ENCODE measurements at regions of chr3 and their contacts with region 1.

Region 1: GRCh38 chr3:120596116-120596852 is at the start of gene NDUFB4:
- DNase-seq: peak; percentile 98
- ATAC-seq: peak; percentile 96
- H3K4me3 ChIP-seq: peak within 1 kb of the TSS; percentile 98
- H3K27ac ChIP-seq: peak within 1 kb of the TSS; percentile 97
- H3K4me1 ChIP-seq: no peaks in the 10 kb centered on the region; the same call in 1 of the 2 replicates
- H3K27me3 ChIP-seq: no peaks in the 10 kb centered on the region
- CTCF ChIP-seq: no peak
- EP300 ChIP-seq: no peak
- POLR2A ChIP-seq: peak; percentile 90
- RAD21 ChIP-seq: no peak
- polyA plus RNA-seq, gene NDUFB4: 732 to 864 TPM

Region 2: DNA sequence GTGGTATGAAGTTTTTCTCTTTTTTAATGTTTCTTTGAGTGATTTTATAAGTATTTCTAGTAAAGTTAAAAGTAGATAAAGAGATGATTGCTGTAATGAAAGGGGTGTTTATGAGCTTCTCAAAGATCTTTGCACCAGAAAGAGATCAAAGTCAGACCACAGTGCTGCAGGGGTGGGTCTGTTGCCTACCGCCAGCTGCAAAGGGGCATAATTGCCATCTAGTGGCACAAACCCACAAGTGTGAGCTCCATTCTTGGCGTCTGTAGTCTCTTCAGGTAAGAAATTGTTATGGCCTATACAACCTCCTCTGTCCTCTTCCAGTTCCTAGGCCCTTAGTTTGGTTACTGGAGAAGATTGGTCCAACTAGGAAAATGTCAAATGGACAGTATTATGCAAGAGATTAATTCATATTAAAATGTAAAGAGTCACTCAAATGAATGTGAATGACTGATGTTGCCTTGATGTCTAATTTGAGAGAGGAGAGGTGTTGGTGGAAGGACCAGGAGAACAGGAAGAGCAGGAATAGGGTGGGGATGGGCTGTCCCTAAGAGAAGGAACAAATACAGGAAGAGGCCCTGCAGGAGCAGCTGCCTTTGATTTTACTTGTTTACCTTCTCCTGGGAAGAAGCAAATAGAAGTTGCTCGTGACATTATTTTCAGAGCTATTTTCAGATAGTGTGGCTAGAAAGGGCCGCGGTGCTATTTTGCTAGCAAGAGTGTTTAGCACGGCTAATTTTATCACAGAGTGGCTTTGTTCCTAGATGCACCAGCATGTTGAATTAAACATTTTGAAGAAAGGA is 449.0 kb before region 1 on chr3:
- CTCF ChIA-PET with region 1: no interaction called
- POLR2A ChIA-PET with region 1: no interaction called
- RAD21 ChIA-PET with region 1: no interaction called
- SMC1A ChIA-PET with region 1: no interaction called
- in situ Hi-C with region 1: no loop called
- intact Hi-C with region 1: no loop called
- DNase-seq: no peak
- ATAC-seq: peak; percentile 82
- H3K4me3 ChIP-seq: no peak overlapping the region
- H3K27ac ChIP-seq: no peak overlapping the region
- H3K4me1 ChIP-seq: peaks cover 10% of the 10 kb centered on the region
- H3K27me3 ChIP-seq: no peaks in the 10 kb centered on the region
- CTCF ChIP-seq: peak; percentile 37 to 42 (median 39); a peak in 5 of 6 replicates
- EP300 ChIP-seq: no peak
- POLR2A ChIP-seq: no peak
- RAD21 ChIP-seq: peak; percentile 73

Region 3: GRCh38 chr3:120438665-120439370 is 157.5 kb before region 1 on chr3:
- CTCF ChIA-PET with region 1: no interaction called
- POLR2A ChIA-PET with region 1: no interaction called
- RAD21 ChIA-PET with region 1: no interaction called
- SMC1A ChIA-PET with region 1: no interaction called
- in situ Hi-C with region 1: no loop called
- intact Hi-C with region 1: no loop called
- DNase-seq: no peak
- ATAC-seq: no peak
- H3K4me3 ChIP-seq: no peak overlapping the region
- H3K27ac ChIP-seq: no peak overlapping the region
- H3K4me1 ChIP-seq: no peaks in the 10 kb centered on the region
- H3K27me3 ChIP-seq: peaks cover 0 to 2% of the 10 kb centered on the region in 2 experiments; a peak in 3 of 4 replicates
- CTCF ChIP-seq: no peak
- EP300 ChIP-seq: no peak
- POLR2A ChIP-seq: no peak
- RAD21 ChIP-seq: no peak

Region 4: DNA sequence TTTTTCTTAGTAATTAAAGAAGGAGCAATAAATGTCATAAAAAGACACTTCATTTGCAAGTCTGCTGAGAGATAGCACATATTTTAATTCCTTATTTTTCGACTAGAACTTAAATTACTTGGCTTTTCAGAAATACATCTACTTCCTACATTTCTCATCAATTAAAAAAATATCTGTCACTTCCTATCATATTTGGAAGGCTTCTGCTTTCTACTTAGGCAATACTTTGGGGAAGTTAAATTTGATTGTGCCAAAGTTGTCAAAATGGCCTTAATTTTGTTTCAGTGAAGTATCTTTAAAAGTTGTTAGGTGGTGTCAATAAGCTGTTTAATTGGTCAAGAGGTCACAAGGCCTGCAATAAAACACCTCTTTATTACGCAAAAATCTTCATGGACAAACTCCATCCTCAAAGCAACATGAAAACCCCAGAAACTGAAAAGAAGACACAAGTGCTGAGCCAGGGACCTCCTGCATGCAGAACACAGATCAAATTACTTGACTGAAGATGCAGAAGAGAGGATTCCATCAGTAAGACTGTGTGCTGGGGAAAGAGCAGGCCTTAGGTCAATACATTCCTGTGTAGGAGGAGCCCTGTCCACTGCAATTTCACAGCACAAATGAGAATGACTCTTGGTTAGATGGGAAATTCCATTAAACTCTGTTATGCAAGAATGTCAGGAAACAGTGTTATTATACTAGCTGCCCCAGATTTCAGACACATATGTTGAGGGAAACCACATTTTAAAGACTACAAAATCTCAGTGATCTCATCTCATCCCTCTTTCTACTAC is 97.5 kb before region 1 on chr3:
- CTCF ChIA-PET with region 1: no interaction called
- POLR2A ChIA-PET with region 1: no interaction called
- RAD21 ChIA-PET with region 1: no interaction called
- SMC1A ChIA-PET with region 1: no interaction called
- in situ Hi-C with region 1: no loop called
- intact Hi-C with region 1: no loop called
- DNase-seq: no peak
- ATAC-seq: no peak
- H3K4me3 ChIP-seq: no peak overlapping the region
- H3K27ac ChIP-seq: no peak overlapping the region
- H3K4me1 ChIP-seq: no peaks in the 10 kb centered on the region
- H3K27me3 ChIP-seq: no peaks in the 10 kb centered on the region
- CTCF ChIP-seq: no peak
- EP300 ChIP-seq: no peak
- POLR2A ChIP-seq: no peak
- RAD21 ChIP-seq: no peak

Region 5: GRCh38 chr3:120567370-120568201 is 28.7 kb before region 1 on chr3:
- CTCF ChIA-PET with region 1: interaction called, 16 read pairs
- POLR2A ChIA-PET with region 1: interaction called, 4 read pairs
- RAD21 ChIA-PET with region 1: interaction called, 15 read pairs
- SMC1A ChIA-PET with region 1: interaction called, 19 read pairs
- in situ Hi-C with region 1: no loop called
- intact Hi-C with region 1: no loop called
- DNase-seq: no peak
- ATAC-seq: peak; percentile 89
- H3K4me3 ChIP-seq: no peak overlapping the region
- H3K27ac ChIP-seq: no peak overlapping the region
- H3K4me1 ChIP-seq: no peaks in the 10 kb centered on the region
- H3K27me3 ChIP-seq: no peaks in the 10 kb centered on the region
- CTCF ChIP-seq: peak in 2 of 3 experiments; percentile 21 to 34; a peak in 3 of 6 replicates
- EP300 ChIP-seq: no peak
- POLR2A ChIP-seq: no peak
- RAD21 ChIP-seq: no peak

Region 6: GRCh38 chr3:120678331-120678947 is 82.2 kb after region 1 on chr3:
- CTCF ChIA-PET with region 1: interaction called, 3 read pairs
- POLR2A ChIA-PET with region 1: interaction called, 8 read pairs
- RAD21 ChIA-PET with region 1: interaction called, 12 read pairs
- SMC1A ChIA-PET with region 1: interaction called, 17 read pairs
- in situ Hi-C with region 1: no loop called
- intact Hi-C with region 1: no loop called
- DNase-seq: peak; percentile 35
- ATAC-seq: peak; percentile 92
- H3K4me3 ChIP-seq: no peak overlapping the region
- H3K27ac ChIP-seq: peak overlapping the region; percentile 45
- H3K4me1 ChIP-seq: peaks cover 12% of the 10 kb centered on the region; the same call in 1 of the 2 replicates
- H3K27me3 ChIP-seq: no peaks in the 10 kb centered on the region
- CTCF ChIP-seq: no peak
- EP300 ChIP-seq: no peak
- POLR2A ChIP-seq: no peak
- RAD21 ChIP-seq: no peak

Region 7: DNA sequence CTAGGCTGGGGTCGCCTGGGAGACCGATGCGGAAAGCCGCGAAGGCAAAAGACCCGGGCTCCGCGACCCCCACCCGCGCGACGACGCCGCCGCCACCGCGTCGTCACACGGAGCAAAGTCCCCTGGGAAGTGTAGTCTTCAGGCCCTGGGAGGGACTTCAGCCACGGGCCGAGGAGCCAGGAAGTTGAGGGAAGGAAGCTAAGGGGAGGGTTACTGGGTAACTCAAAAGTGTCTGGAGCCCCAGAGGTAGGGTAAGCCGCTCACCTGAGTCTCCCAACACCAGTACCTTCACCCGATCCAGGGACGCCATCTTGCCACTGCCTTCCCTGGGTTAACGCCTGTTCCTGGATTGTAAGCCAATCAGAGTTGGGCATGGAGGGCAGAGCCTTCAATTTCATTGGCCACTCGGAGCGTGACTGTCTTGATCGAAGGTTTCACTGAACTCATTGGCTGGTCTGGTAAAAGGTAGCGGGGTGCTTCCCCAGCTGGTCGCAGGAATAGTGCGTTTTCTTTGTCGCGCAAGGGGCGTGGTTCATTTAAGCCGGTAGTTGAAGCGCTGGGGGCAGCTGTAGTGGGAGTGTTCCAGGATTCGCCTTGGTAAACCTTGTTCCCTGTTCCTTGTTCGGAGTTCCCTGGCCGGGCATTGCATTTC is 146.0 kb after region 1 on chr3 and contains the starts of genes GTF2E1 and RABL3:
- CTCF ChIA-PET with region 1: interaction called, 3 read pairs
- POLR2A ChIA-PET with region 1: interaction called, 23 read pairs
- RAD21 ChIA-PET with region 1: interaction called, 6 read pairs
- SMC1A ChIA-PET with region 1: interaction called, 14 read pairs
- in situ Hi-C with region 1: no loop called
- intact Hi-C with region 1: loop called (anchors 2 kb)
- DNase-seq: peak; percentile 99
- ATAC-seq: peak; percentile 99
- H3K4me3 ChIP-seq: peak within 1 kb of the TSS; percentile 100
- H3K27ac ChIP-seq: peak within 1 kb of the TSS; percentile 100
- H3K4me1 ChIP-seq: no peaks in the 10 kb centered on the region
- H3K27me3 ChIP-seq: no peaks in the 10 kb centered on the region
- CTCF ChIP-seq: no peak
- EP300 ChIP-seq: 0 out of 4 replicates have a peak, but pooled peaks of 1 of the 2 experiments have one; percentile 14
- POLR2A ChIP-seq: peak; percentile 91
- RAD21 ChIP-seq: no peak
- polyA plus RNA-seq, gene GTF2E1: 9.2 to 17.6 TPM
- polyA plus RNA-seq, gene RABL3: 28.1 to 30.3 TPM

Region 8: GRCh38 chr3:120780977-120781376 is 184.7 kb after region 1 on chr3:
- CTCF ChIA-PET with region 1: interaction called, 3 read pairs
- POLR2A ChIA-PET with region 1: no interaction called
- RAD21 ChIA-PET with region 1: interaction called, 6 read pairs
- SMC1A ChIA-PET with region 1: interaction called, 3 read pairs
- in situ Hi-C with region 1: no loop called
- intact Hi-C with region 1: loop called (anchors 10 kb)
- DNase-seq: peak; percentile 62
- ATAC-seq: peak; percentile 98
- H3K4me3 ChIP-seq: no peak overlapping the region
- H3K27ac ChIP-seq: peak overlapping the region; percentile 7; the same call in 1 of the 2 replicates
- H3K4me1 ChIP-seq: peaks cover 11% of the 10 kb centered on the region
- H3K27me3 ChIP-seq: no peaks in the 10 kb centered on the region
- CTCF ChIP-seq: no peak
- EP300 ChIP-seq: peak; percentile 83 to 87
- POLR2A ChIP-seq: no peak
- RAD21 ChIP-seq: no peak